ENCODE measurements at regions of chr20 and their contacts with region 1.

Region 1: GRCh38 chr20:35146920-35147574 is at the start of gene EDEM2:
- DNase-seq: peak; percentile 92
- ATAC-seq: peak; percentile 90
- H3K4me3 ChIP-seq: peak within 1 kb of the TSS; percentile 77 to 98
- H3K27ac ChIP-seq: peak within 1 kb of the TSS; percentile 78
- H3K4me1 ChIP-seq: peaks cover 3 to 12% of the 10 kb centered on the region in 2 experiments; a peak in 2 of 4 replicates
- H3K27me3 ChIP-seq: no peaks in the 10 kb centered on the region
- CTCF ChIP-seq: no peak
- POLR2A ChIP-seq: peak; percentile 81
- RAD21 ChIP-seq: 0 out of 2 replicates have a peak, but pooled peaks have one; percentile 10
- total RNA-seq, gene EDEM2: 22.8 TPM

Region 2: DNA sequence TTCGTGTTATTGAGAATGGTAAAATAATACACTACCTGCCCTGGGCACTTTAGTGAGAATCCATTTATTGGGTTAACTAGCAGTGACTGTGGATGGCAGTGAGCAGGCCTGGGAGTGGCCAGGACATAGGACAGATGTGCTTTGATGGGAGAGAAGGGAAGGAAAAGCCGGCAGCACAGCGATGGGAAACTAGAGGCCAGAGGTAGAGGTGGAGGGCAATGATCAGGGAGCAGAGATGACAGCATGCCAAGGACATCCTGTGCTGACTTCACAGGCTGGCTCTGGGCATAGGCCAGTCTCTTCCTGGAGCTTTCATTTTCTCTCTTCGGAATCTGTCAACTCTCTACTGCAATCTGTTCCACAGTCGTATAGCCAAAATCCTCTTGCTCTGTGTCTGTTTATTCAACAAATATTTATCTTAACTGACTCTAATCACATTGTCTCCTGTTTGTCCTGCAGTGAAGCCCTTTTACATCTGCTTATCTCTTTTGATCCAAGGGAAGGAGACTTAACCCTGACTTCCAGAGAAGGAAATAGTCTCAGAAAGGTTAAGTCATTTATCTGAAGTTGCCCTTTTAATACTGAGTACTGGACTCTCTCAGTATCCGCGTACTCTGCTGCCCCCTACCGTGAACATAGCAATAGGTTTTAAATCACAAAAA is 61.0 kb after region 1 on chr20:
- CTCF ChIA-PET with region 1: interaction called, 29 read pairs
- POLR2A ChIA-PET with region 1: no interaction called
- RAD21 ChIA-PET with region 1: interaction called in 1 of 2 experiments, 4 read pairs
- intact Hi-C with region 1: loop called (anchors 1 kb)
- DNase-seq: peak; percentile 64
- ATAC-seq: peak; percentile 98
- H3K4me3 ChIP-seq: no peak overlapping the region
- H3K27ac ChIP-seq: peak overlapping the region; percentile 8; the same call in 1 of the 2 replicates
- H3K4me1 ChIP-seq: peaks cover 0 to 9% of the 10 kb centered on the region in 2 experiments; a peak in 2 of 4 replicates
- H3K27me3 ChIP-seq: no peaks in the 10 kb centered on the region
- CTCF ChIP-seq: peak; percentile 74 to 92 (median 84)
- POLR2A ChIP-seq: no peak
- RAD21 ChIP-seq: peak; percentile 98

Region 3: GRCh38 chr20:35246723-35247122 is 99.7 kb after region 1 on chr20:
- CTCF ChIA-PET with region 1: no interaction called
- POLR2A ChIA-PET with region 1: no interaction called
- RAD21 ChIA-PET with region 1: no interaction called
- intact Hi-C with region 1: no loop called
- DNase-seq: no peak
- ATAC-seq: no peak
- H3K4me3 ChIP-seq: no peak overlapping the region
- H3K27ac ChIP-seq: no peak overlapping the region
- H3K4me1 ChIP-seq: peaks cover 0 to 3% of the 10 kb centered on the region in 2 experiments; a peak in 1 of 4 replicates
- H3K27me3 ChIP-seq: no peaks in the 10 kb centered on the region
- CTCF ChIP-seq: no peak
- POLR2A ChIP-seq: no peak
- RAD21 ChIP-seq: no peak

Region 4: DNA sequence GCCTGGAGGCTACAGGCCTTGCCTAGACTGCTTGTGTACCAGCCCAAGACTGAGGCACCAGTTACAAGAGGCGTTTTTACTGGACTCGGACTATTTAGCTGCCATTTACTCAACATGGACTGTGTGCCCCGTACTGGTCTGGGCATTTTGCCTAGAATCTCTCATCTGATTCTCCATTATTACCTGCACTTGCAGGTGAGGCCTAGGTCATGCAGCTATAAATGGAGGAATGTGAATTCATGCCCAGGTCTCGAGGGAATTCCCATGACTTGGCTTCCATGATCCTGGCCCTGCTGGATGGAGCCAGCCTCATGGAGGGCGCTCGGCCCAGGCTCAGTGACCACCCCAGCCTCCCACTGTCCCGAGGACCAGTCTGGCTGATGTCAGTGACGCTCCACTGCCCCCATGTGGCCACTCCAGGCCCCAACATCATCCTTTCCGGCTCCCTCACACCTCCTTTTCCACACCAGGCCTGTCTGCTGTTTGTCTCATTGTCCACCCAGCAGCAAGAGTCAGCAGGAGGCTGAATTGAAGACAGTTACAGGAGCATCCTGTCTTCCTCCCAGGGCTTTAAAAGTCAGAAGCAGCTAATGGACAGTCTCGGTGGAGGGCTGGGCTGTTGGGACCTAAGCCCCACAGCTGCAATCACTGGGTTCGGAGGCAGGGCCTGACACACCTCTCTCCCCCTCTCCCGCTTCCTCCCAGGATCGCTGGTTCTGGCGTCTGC is 122.2 kb after region 1 on chr20:
- CTCF ChIA-PET with region 1: interaction called, 27 read pairs
- POLR2A ChIA-PET with region 1: interaction called, 4 read pairs
- RAD21 ChIA-PET with region 1: interaction called, 5 to 7 read pairs
- intact Hi-C with region 1: loop called (anchors 1 kb)
- DNase-seq: no peak
- ATAC-seq: peak; percentile 89
- H3K4me3 ChIP-seq: no peak overlapping the region
- H3K27ac ChIP-seq: no peak overlapping the region
- H3K4me1 ChIP-seq: peaks cover 9 to 17% of the 10 kb centered on the region in 2 experiments
- H3K27me3 ChIP-seq: no peaks in the 10 kb centered on the region
- CTCF ChIP-seq: peak; percentile 60 to 89 (median 88); a peak in 5 of 6 replicates
- POLR2A ChIP-seq: no peak
- RAD21 ChIP-seq: peak; percentile 84

Region 5: GRCh38 chr20:35277531-35278395 is 130.7 kb after region 1 on chr20 and contains the start of gene MMP24OS:
- CTCF ChIA-PET with region 1: interaction called, 13 read pairs
- POLR2A ChIA-PET with region 1: no interaction called
- RAD21 ChIA-PET with region 1: no interaction called
- intact Hi-C with region 1: no loop called
- DNase-seq: peak; percentile 66
- ATAC-seq: peak; percentile 94
- H3K4me3 ChIP-seq: peak within 1 kb of the TSS; percentile 83 to 87
- H3K27ac ChIP-seq: peak within 1 kb of the TSS; percentile 78
- H3K4me1 ChIP-seq: peaks cover 7 to 25% of the 10 kb centered on the region in 2 experiments; a peak in 3 of 4 replicates
- H3K27me3 ChIP-seq: no peaks in the 10 kb centered on the region
- CTCF ChIP-seq: peak in 2 of 3 experiments; percentile 8 to 22; a peak in 2 of 6 replicates
- POLR2A ChIP-seq: peak; percentile 39
- RAD21 ChIP-seq: no peak
- total RNA-seq, gene MMP24OS: 59.6 TPM

Region 6: GRCh38 chr20:35447082-35447789 is 300.2 kb after region 1 on chr20:
- CTCF ChIA-PET with region 1: interaction called, 5 read pairs
- POLR2A ChIA-PET with region 1: no interaction called
- RAD21 ChIA-PET with region 1: no interaction called
- intact Hi-C with region 1: loop called (anchors 2 kb)
- DNase-seq: peak; percentile 68
- ATAC-seq: peak; percentile 95
- H3K4me3 ChIP-seq: peak overlapping the region; percentile 23 to 29; a peak in 3 of 4 replicates
- H3K27ac ChIP-seq: no peak overlapping the region
- H3K4me1 ChIP-seq: peaks cover 3 to 21% of the 10 kb centered on the region in 2 experiments; a peak in 3 of 4 replicates
- H3K27me3 ChIP-seq: no peaks in the 10 kb centered on the region
- CTCF ChIP-seq: peak; percentile 72 to 98 (median 90); a peak in 5 of 6 replicates
- POLR2A ChIP-seq: no peak
- RAD21 ChIP-seq: peak; percentile 63

Region 7: GRCh38 chr20:35757098-35757705 is 610.2 kb after region 1 on chr20:
- CTCF ChIA-PET with region 1: no interaction called
- POLR2A ChIA-PET with region 1: no interaction called
- RAD21 ChIA-PET with region 1: no interaction called
- intact Hi-C with region 1: no loop called
- DNase-seq: no peak
- ATAC-seq: peak; percentile 82
- H3K4me3 ChIP-seq: no peak overlapping the region
- H3K27ac ChIP-seq: no peak overlapping the region
- H3K4me1 ChIP-seq: peaks cover 2 to 19% of the 10 kb centered on the region in 2 experiments; a peak in 2 of 4 replicates
- H3K27me3 ChIP-seq: no peaks in the 10 kb centered on the region
- CTCF ChIP-seq: no peak
- POLR2A ChIP-seq: no peak
- RAD21 ChIP-seq: no peak

Measured in HCT116 (cell line).